ENCODE measurements at regions of chr14 and their contacts with region 1.

Region 1: GRCh38 chr14:76929927-76930326 is 98.6 kb downstream of the IRF2BPL start:
- DNase-seq: peak; percentile 67
- ATAC-seq: peak; percentile 75
- H3K4me3 Mint-ChIP-seq: peak overlapping the region; percentile 71
- H3K27ac Mint-ChIP-seq: peak overlapping the region; percentile 87
- H3K4me1 Mint-ChIP-seq: peaks cover 67% of the 10 kb centered on the region
- H3K27me3 Mint-ChIP-seq: no peaks in the 10 kb centered on the region

Region 2: GRCh38 chr14:76687611-76688382 is 242.1 kb before region 1 on chr14:
- POLR2A ChIA-PET with region 1: no interaction called
- DNase-seq: no peak
- ATAC-seq: no peak
- H3K4me3 Mint-ChIP-seq: no peak overlapping the region
- H3K27ac Mint-ChIP-seq: no peak overlapping the region
- H3K4me1 Mint-ChIP-seq: no peaks in the 10 kb centered on the region
- H3K27me3 Mint-ChIP-seq: peaks cover 23% of the 10 kb centered on the region

Region 3: GRCh38 chr14:76882651-76883050 is 47.3 kb before region 1 on chr14:
- POLR2A ChIA-PET with region 1: no interaction called
- DNase-seq: no peak
- ATAC-seq: no peak
- H3K4me3 Mint-ChIP-seq: no peak overlapping the region
- H3K27ac Mint-ChIP-seq: no peak overlapping the region
- H3K4me1 Mint-ChIP-seq: peaks cover 6% of the 10 kb centered on the region
- H3K27me3 Mint-ChIP-seq: peaks cover 8% of the 10 kb centered on the region

Region 4: DNA sequence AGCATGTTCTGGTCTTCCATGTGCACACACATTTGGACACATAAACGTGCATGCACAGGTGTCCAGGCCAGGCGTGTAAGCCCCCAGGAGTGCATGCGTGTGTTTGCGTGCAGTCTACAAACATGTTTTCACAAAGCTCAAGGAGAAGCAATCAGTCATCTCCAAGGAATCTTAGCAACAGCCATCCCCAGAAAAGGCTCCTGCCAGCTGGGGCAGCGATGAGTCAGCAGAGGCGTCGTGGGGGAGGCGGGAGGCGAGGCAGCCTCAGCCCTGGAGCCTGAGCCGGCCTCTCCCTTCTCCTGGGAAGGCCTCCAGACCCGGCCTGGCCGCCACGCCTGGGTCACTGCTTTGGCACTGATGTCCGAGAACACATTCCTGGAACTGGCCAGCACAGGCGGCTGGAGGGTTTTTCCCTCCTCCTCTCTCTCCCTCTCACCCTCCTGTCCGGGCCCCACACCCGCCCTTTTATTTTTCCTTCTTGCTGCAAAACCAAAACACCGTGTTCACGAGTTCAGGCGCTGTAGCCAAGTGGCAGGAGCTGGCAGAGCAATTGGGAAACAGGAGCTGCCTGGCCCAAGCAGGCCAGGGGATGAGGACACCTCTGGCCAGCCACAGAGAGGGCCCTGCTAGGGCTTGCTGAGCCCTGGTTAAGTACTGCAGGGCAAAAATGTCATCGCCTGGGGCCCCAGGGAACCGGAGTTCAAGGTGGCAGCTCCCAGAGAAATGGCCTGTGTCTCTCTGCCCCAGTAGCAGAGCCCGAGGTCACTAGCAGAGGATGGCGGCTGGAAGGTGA is 11.0 kb before region 1 on chr14:
- POLR2A ChIA-PET with region 1: interaction called, 28 read pairs
- DNase-seq: no peak
- ATAC-seq: no peak
- H3K4me3 Mint-ChIP-seq: peak overlapping the region; percentile 47
- H3K27ac Mint-ChIP-seq: peak overlapping the region; percentile 58
- H3K4me1 Mint-ChIP-seq: peaks cover 49% of the 10 kb centered on the region
- H3K27me3 Mint-ChIP-seq: peaks cover 3% of the 10 kb centered on the region

Region 5: GRCh38 chr14:76941946-76942805 is 12.2 kb after region 1 on chr14:
- POLR2A ChIA-PET with region 1: interaction called, 11 read pairs
- DNase-seq: no peak
- ATAC-seq: peak; percentile 23
- H3K4me3 Mint-ChIP-seq: no peak overlapping the region
- H3K27ac Mint-ChIP-seq: peak overlapping the region; percentile 38
- H3K4me1 Mint-ChIP-seq: peaks cover 15% of the 10 kb centered on the region
- H3K27me3 Mint-ChIP-seq: no peaks in the 10 kb centered on the region

Region 6: GRCh38 chr14:77033622-77034521 is 103.9 kb after region 1 on chr14:
- POLR2A ChIA-PET with region 1: interaction called, 23 read pairs
- DNase-seq: peak; percentile 79
- ATAC-seq: peak; percentile 48
- H3K4me3 Mint-ChIP-seq: peak overlapping the region; percentile 93
- H3K27ac Mint-ChIP-seq: peak overlapping the region; percentile 95
- H3K4me1 Mint-ChIP-seq: peaks cover 63% of the 10 kb centered on the region
- H3K27me3 Mint-ChIP-seq: no peaks in the 10 kb centered on the region